Activated CD4-positive, alpha-beta T cell treated with anti-CD3 and anti-CD28 coated beads, Interleukin-2, amount 10 ng/mL, durations not matched to agents 24 days and 14 days (primary cell): ENCODE measurements at regions of chr7 and their contacts with region 1.

Region 1: DNA sequence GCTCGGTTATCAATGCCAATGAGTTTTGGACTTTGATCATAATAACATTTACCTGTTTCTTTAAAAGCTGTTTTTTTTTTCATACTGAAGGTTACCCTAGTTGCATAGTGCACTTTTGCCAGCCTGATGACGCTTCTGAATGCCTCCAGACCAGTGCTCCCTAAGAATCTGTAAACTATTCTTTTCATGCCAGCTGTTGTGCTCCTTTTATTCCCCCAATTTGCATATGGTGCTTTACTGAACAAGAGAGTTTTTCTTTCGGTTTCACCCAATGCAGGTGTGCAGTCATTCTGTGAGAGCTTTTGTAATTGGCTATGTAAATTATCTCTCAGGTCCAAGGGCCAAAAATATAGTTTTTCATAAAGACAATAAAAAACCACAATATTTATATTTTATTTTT is 48.1 kb upstream of the GLCCI1 start:
- DNase-seq: peak; percentile 73
- H3K4me3 Mint-ChIP-seq: peak overlapping the region; percentile 0
- H3K27ac Mint-ChIP-seq: no peak overlapping the region
- H3K4me1 Mint-ChIP-seq: peaks cover 30% of the 10 kb centered on the region
- H3K27me3 Mint-ChIP-seq: no peaks in the 10 kb centered on the region

Region 2: GRCh38 chr7:7731732-7732131 is 188.7 kb before region 1 on chr7:
- intact Hi-C with region 1: no loop called
- DNase-seq: no peak
- H3K4me3 Mint-ChIP-seq: no peak overlapping the region
- H3K27ac Mint-ChIP-seq: no peak overlapping the region
- H3K4me1 Mint-ChIP-seq: no peaks in the 10 kb centered on the region
- H3K27me3 Mint-ChIP-seq: no peaks in the 10 kb centered on the region

Region 3: DNA sequence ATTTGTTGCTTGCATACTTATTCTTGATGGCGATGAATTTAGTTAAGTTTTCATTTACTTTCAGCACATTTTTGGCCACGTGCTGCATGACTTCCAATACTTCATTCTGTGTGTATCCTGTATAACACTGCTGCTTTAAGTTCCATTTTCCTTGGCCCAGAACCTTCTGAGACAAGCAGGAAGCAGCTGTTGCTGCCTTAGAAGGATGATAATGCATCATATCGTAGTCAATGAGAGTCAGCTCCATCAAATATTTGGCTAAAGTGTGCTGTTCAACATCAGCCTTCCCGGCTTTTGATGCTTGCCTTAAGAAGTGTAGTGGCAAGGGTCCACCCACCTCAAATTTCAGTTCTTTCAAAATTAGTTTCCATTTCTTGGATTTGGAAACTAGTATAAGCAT is 11.1 kb before region 1 on chr7:
- intact Hi-C with region 1: no loop called
- DNase-seq: no peak
- H3K4me3 Mint-ChIP-seq: no peak overlapping the region
- H3K27ac Mint-ChIP-seq: no peak overlapping the region
- H3K4me1 Mint-ChIP-seq: no peaks in the 10 kb centered on the region
- H3K27me3 Mint-ChIP-seq: no peaks in the 10 kb centered on the region

Region 4: GRCh38 chr7:7944619-7945282 is 24.3 kb after region 1 on chr7:
- intact Hi-C with region 1: loop called (anchors 2 kb)
- DNase-seq: peak; percentile 80
- H3K4me3 Mint-ChIP-seq: peak overlapping the region; percentile 65
- H3K27ac Mint-ChIP-seq: peak overlapping the region; percentile 49
- H3K4me1 Mint-ChIP-seq: peaks cover 13% of the 10 kb centered on the region
- H3K27me3 Mint-ChIP-seq: no peaks in the 10 kb centered on the region